ENCODE measurements at regions of chrX and their contacts with region 1.

Region 1: GRCh38 chrX:150508451-150509367 is 59.7 kb upstream of the MTM1 start:
- DNase-seq: peak; percentile 48 to 71 (median 58)
- ATAC-seq: peak; percentile 83 to 89 (median 85)
- H3K4me3 ChIP-seq: peak overlapping the region in 3 of 12 donors; percentile 27 to 38 (median 28)
- H3K27ac ChIP-seq: peak overlapping the region; percentile 54 to 87 (median 74)
- H3K4me1 ChIP-seq: peaks cover 0 to 38% (median 7%) of the 10 kb centered on the region in 12 donors
- H3K27me3 ChIP-seq: no peaks in the 10 kb centered on the region
- CTCF ChIP-seq: no peak
- POLR2A ChIP-seq: no peak

Region 2: GRCh38 chrX:150547375-150548115 is 38.8 kb after region 1 on chrX:
- intact Hi-C with region 1: loop called in 1 of 10 experiments (anchors 5 kb)
- DNase-seq: peak; percentile 66 to 85 (median 78)
- ATAC-seq: peak; percentile 84 to 95 (median 91)
- H3K4me3 ChIP-seq: peak overlapping the region in 11 of 12 donors; percentile 3 to 55 (median 44)
- H3K27ac ChIP-seq: peak overlapping the region; percentile 53 to 88 (median 74)
- H3K4me1 ChIP-seq: peaks cover 0 to 24% (median 9%) of the 10 kb centered on the region in 12 donors
- H3K27me3 ChIP-seq: no peaks in the 10 kb centered on the region
- CTCF ChIP-seq: no peak
- POLR2A ChIP-seq: peak in 1 of 2 donors; percentile 15

Region 3: GRCh38 chrX:150568320-150569154 is 59.8 kb after region 1 on chrX and contains the start of gene MTM1:
- intact Hi-C with region 1: loop called in 4 of 10 experiments (anchors 10 kb)
- DNase-seq: peak; percentile 95 to 97 (median 95)
- ATAC-seq: peak; percentile 98 to 99 (median 99)
- H3K4me3 ChIP-seq: peak within 1 kb of the TSS; percentile 61 to 97 (median 75)
- H3K27ac ChIP-seq: peak within 1 kb of the TSS; percentile 67 to 88 (median 84)
- H3K4me1 ChIP-seq: peaks cover 0 to 44% (median 15%) of the 10 kb centered on the region in 12 donors
- H3K27me3 ChIP-seq: no peaks in the 10 kb centered on the region
- CTCF ChIP-seq: no peak
- POLR2A ChIP-seq: peak in 1 of 2 donors; percentile 67
- total RNA-seq, gene MTM1: 7.8 to 18.9 (median 11.9) TPM

Region 4: GRCh38 chrX:150575416-150575808 is 66.7 kb after region 1 on chrX:
- intact Hi-C with region 1: loop called in 3 of 10 experiments (anchors 10 kb)
- DNase-seq: no peak
- ATAC-seq: no peak
- H3K4me3 ChIP-seq: peak overlapping the region in 1 of 12 donors; percentile 25
- H3K27ac ChIP-seq: peak overlapping the region in 1 of 12 donors; percentile 54
- H3K4me1 ChIP-seq: peaks cover 0 to 54% (median 8%) of the 10 kb centered on the region in 12 donors
- H3K27me3 ChIP-seq: no peaks in the 10 kb centered on the region
- CTCF ChIP-seq: no peak
- POLR2A ChIP-seq: no peak

Region 5: GRCh38 chrX:150599226-150599625 is 90.5 kb after region 1 on chrX:
- intact Hi-C with region 1: loop called in 1 of 10 experiments (anchors 10 kb)
- DNase-seq: no peak
- ATAC-seq: no peak
- H3K4me3 ChIP-seq: no peak overlapping the region
- H3K27ac ChIP-seq: no peak overlapping the region
- H3K4me1 ChIP-seq: no peaks in the 10 kb centered on the region
- H3K27me3 ChIP-seq: no peaks in the 10 kb centered on the region
- CTCF ChIP-seq: no peak
- POLR2A ChIP-seq: no peak